ENCODE measurements at regions of chr12 and their contacts with region 1.

Region 1: GRCh38 chr12:110458756-110459155 is 8.6 kb upstream of the ARPC3 start:
- DNase-seq: no peak
- H3K4me3 ChIP-seq: no peak overlapping the region
- H3K27ac ChIP-seq: no peak overlapping the region
- H3K4me1 ChIP-seq: no peaks in the 10 kb centered on the region
- H3K27me3 ChIP-seq: no peaks in the 10 kb centered on the region
- CTCF ChIP-seq: no peak
- POLR2A ChIP-seq: no peak

Region 2: DNA sequence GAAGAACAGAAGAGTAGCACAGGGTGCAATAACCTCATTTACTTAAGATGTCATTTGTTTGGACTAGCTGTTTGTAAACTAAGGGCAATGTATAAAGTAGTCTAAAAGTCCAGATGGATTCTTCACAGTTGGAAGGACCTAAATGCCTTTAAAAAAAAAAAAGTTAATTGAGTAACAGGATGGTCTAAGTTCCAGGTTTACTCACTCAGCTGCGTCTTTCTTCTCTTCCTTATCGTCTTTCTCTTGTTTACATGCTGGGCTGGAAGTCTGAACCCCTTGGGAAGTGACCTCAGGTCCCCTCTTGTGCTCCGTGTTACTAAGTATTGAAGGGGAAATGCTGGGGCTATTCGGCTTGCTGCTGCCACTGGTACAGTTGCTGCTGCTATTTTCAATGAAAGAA is 1029.5 kb after region 1 on chr12:
- intact Hi-C with region 1: loop called (anchors 5 kb)
- DNase-seq: no peak
- H3K4me3 ChIP-seq: no peak overlapping the region
- H3K27ac ChIP-seq: no peak overlapping the region
- H3K4me1 ChIP-seq: no peaks in the 10 kb centered on the region
- H3K27me3 ChIP-seq: no peaks in the 10 kb centered on the region
- CTCF ChIP-seq: no peak
- POLR2A ChIP-seq: no peak

Measured in breast epithelium (tissue), 4 donors.